Panc1 (cell line): ENCODE measurements at regions of chr19 and their contacts with region 1.

Region 1: GRCh38 chr19:34501339-34502320 is 20.1 kb downstream of the WTIP start:
- DNase-seq: peak; percentile 69
- ATAC-seq: peak; percentile 87
- H3K4me3 ChIP-seq: no peak overlapping the region
- H3K27ac ChIP-seq: peak overlapping the region; percentile 37
- H3K4me1 ChIP-seq: peaks cover 22% of the 10 kb centered on the region
- H3K27me3 ChIP-seq: no peaks in the 10 kb centered on the region
- CTCF ChIP-seq: peak; percentile 100

Region 2: GRCh38 chr19:34428549-34429285 is 72.9 kb before region 1 on chr19:
- CTCF ChIA-PET with region 1: no interaction called
- POLR2A ChIA-PET with region 1: no interaction called
- in situ Hi-C with region 1: no loop called
- intact Hi-C with region 1: no loop called
- DNase-seq: no peak
- ATAC-seq: peak; percentile 80
- H3K4me3 ChIP-seq: peak overlapping the region; percentile 90 to 95
- H3K27ac ChIP-seq: peak overlapping the region; percentile 85
- H3K4me1 ChIP-seq: peaks cover 15% of the 10 kb centered on the region
- H3K27me3 ChIP-seq: no peaks in the 10 kb centered on the region
- CTCF ChIP-seq: no peak

Region 3: GRCh38 chr19:34556488-34556887 is 54.9 kb after region 1 on chr19:
- CTCF ChIA-PET with region 1: no interaction called
- POLR2A ChIA-PET with region 1: no interaction called
- in situ Hi-C with region 1: no loop called
- intact Hi-C with region 1: loop called (anchors 2 kb)
- DNase-seq: no peak
- ATAC-seq: peak; percentile 84
- H3K4me3 ChIP-seq: no peak overlapping the region
- H3K27ac ChIP-seq: no peak overlapping the region
- H3K4me1 ChIP-seq: no peaks in the 10 kb centered on the region
- H3K27me3 ChIP-seq: peaks cover 18% of the 10 kb centered on the region
- CTCF ChIP-seq: peak; percentile 86

Region 4: DNA sequence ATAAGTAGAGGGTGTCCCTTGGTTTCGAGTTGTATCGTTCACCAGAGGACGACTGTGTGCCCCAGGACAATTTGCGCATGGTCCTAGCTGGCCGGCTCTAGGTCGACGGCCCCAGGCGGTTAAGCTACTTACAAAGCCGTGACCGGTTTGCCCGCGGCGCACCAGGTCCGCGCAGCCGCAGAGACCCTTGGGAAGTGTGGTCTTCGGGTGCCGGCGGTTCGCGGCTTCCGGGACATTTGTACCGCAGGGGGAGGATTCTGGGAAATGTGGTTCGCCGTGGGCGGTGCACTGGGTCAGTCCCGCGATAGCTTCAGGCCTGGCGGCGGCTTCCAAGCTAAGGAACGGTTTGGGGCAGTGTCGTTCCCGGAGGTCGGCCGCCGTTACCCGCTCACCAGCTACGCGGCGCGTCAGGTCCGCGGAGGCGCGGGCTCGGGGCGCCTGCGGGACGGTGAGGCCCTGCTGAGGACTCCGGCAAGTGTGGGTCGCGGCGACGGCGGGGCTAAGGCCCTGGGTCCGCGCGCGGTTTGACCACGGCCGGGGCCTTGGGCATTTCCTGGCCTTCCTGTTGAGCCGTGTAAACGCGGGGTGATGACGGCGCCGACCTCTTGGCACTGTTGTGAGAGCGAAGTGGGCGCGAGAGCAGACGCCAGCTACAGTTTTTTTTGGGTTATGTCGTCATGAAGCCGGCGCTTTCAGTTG is 175.9 kb after region 1 on chr19 and contains the start of gene ZNF302:
- CTCF ChIA-PET with region 1: no interaction called
- POLR2A ChIA-PET with region 1: no interaction called
- in situ Hi-C with region 1: no loop called
- intact Hi-C with region 1: no loop called
- DNase-seq: peak; percentile 94
- ATAC-seq: peak; percentile 98
- H3K4me3 ChIP-seq: peak within 1 kb of the TSS; percentile 68 to 82
- H3K27ac ChIP-seq: peak within 1 kb of the TSS; percentile 90
- H3K4me1 ChIP-seq: peaks cover 7% of the 10 kb centered on the region; the same call in 1 of the 2 replicates
- H3K27me3 ChIP-seq: no peaks in the 10 kb centered on the region
- CTCF ChIP-seq: no peak
- total RNA-seq, gene ZNF302: 26.4 TPM